CD4-positive, alpha-beta T cell (primary cell): ENCODE measurements at regions of chr2 and their contacts with region 1.

Region 1: GRCh38 chr2:55718165-55719008 is 24.7 kb upstream of the PNPT1 start:
- DNase-seq: peak in 8 of 14 experiments; percentile 6 to 66 (median 32)
- ATAC-seq: no peak
- H3K4me3 ChIP-seq: no peak overlapping the region
- H3K4me3 Mint-ChIP-seq: no peak overlapping the region
- H3K27ac ChIP-seq: no peak overlapping the region
- H3K27ac Mint-ChIP-seq: no peak overlapping the region
- H3K4me1 ChIP-seq: no peaks in the 10 kb centered on the region
- H3K4me1 Mint-ChIP-seq: no peaks in the 10 kb centered on the region
- H3K27me3 ChIP-seq: no peaks in the 10 kb centered on the region
- H3K27me3 Mint-ChIP-seq: peaks cover 8% of the 10 kb centered on the region
- CTCF ChIP-seq: peak; percentile 88

Region 2: DNA sequence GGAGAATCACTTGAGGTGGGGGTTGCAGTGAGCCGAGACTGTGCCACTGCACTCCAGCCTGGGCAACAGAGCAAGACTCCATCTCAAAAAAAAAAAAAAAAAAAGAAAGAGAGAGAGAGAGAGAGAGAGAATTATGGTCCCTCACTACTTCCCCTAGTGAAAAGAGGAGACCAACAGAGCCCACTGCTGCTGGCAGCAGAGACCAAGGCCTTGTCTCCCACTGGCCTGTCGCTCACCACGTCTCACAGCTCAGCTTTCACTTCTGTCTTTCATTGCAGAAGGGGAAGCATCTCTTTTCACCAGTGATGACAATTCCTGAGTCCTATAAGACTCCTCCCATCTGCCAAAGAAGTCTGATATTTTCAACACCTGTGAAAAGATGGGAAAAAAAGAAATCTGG is 567.6 kb before region 1 on chr2:
- CTCF ChIA-PET with region 1: no interaction called
- POLR2A ChIA-PET with region 1: no interaction called
- intact Hi-C with region 1: no loop called
- DNase-seq: peak in 3 of 14 experiments; percentile 15 to 48 (median 48)
- ATAC-seq: no peak
- H3K4me3 ChIP-seq: no peak overlapping the region
- H3K4me3 Mint-ChIP-seq: no peak overlapping the region
- H3K27ac ChIP-seq: no peak overlapping the region
- H3K27ac Mint-ChIP-seq: no peak overlapping the region
- H3K4me1 ChIP-seq: peaks cover 2% of the 10 kb centered on the region
- H3K4me1 Mint-ChIP-seq: no peaks in the 10 kb centered on the region
- H3K27me3 ChIP-seq: no peaks in the 10 kb centered on the region
- H3K27me3 Mint-ChIP-seq: no peaks in the 10 kb centered on the region
- CTCF ChIP-seq: no peak

Region 3: DNA sequence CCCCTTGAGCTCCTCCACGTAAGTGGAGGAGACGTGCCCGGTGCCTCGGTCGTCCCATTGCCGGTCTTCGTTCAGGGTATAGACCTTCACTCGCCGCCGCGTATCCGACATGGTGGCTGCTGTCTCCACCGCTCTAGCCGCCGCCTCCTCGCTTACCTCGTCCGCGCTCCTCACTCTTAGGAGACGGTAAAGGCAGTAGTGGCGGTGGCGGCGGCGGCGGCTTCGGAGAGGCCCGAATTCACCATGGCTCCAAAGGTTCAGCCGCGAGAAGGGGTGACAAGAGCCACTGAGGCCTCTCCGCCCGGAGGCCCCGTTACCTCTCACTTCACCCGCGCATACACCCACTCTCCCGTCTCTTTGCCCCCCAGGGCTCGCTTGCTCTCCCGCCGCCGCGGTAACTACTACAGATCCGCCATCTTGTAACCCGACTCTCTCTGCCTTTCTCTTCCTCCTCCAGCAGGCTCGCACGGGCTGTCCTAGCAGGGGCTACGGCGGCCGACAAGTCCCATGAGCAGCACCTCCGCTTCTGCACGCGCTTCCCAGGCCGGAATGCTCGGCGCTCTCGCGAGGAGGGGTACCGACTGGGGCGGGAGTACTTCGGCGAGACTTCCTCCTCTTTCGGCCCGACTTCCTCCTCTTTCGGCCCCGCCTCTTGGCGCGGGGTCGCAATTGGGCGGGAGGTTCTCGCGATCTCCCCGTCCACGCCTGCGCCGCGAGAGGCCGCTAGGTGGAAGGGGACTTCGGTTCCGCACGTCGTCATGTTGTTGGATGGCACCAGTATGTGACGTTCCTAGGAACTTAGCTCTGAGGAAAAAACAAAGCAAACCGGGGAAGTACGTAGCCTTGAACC is 101.0 kb before region 1 on chr2 and contains the start of gene PPP4R3B:
- CTCF ChIA-PET with region 1: no interaction called
- POLR2A ChIA-PET with region 1: no interaction called
- intact Hi-C with region 1: no loop called
- DNase-seq: peak; percentile 97 to 100 (median 98)
- ATAC-seq: peak; percentile 80
- H3K4me3 ChIP-seq: peak within 1 kb of the TSS; percentile 82
- H3K4me3 Mint-ChIP-seq: no peak within 1 kb of the TSS
- H3K27ac ChIP-seq: peak within 1 kb of the TSS; percentile 98 to 99
- H3K27ac Mint-ChIP-seq: no peak within 1 kb of the TSS
- H3K4me1 ChIP-seq: peaks cover 37% of the 10 kb centered on the region
- H3K4me1 Mint-ChIP-seq: peaks cover 61% of the 10 kb centered on the region
- H3K27me3 ChIP-seq: no peaks in the 10 kb centered on the region
- H3K27me3 Mint-ChIP-seq: no peaks in the 10 kb centered on the region
- CTCF ChIP-seq: peak; percentile 35
- total RNA-seq, gene PPP4R3B: 47.7 to 50.3 TPM

Region 4: GRCh38 chr2:55636831-55637230 is 81.6 kb before region 1 on chr2:
- CTCF ChIA-PET with region 1: no interaction called
- POLR2A ChIA-PET with region 1: no interaction called
- intact Hi-C with region 1: no loop called
- DNase-seq: no peak
- ATAC-seq: no peak
- H3K4me3 ChIP-seq: no peak overlapping the region
- H3K4me3 Mint-ChIP-seq: no peak overlapping the region
- H3K27ac ChIP-seq: no peak overlapping the region
- H3K27ac Mint-ChIP-seq: no peak overlapping the region
- H3K4me1 ChIP-seq: no peaks in the 10 kb centered on the region
- H3K4me1 Mint-ChIP-seq: no peaks in the 10 kb centered on the region
- H3K27me3 ChIP-seq: no peaks in the 10 kb centered on the region
- H3K27me3 Mint-ChIP-seq: no peaks in the 10 kb centered on the region
- CTCF ChIP-seq: no peak

Region 5: GRCh38 chr2:56132138-56132537 is 413.8 kb after region 1 on chr2:
- CTCF ChIA-PET with region 1: no interaction called
- POLR2A ChIA-PET with region 1: no interaction called
- intact Hi-C with region 1: loop called in 1 of 2 experiments (anchors 5 kb)
- DNase-seq: peak in 2 of 14 experiments; percentile 1 to 4
- ATAC-seq: no peak
- H3K4me3 ChIP-seq: no peak overlapping the region
- H3K4me3 Mint-ChIP-seq: no peak overlapping the region
- H3K27ac ChIP-seq: no peak overlapping the region
- H3K27ac Mint-ChIP-seq: no peak overlapping the region
- H3K4me1 ChIP-seq: no peaks in the 10 kb centered on the region
- H3K4me1 Mint-ChIP-seq: no peaks in the 10 kb centered on the region
- H3K27me3 ChIP-seq: no peaks in the 10 kb centered on the region
- H3K27me3 Mint-ChIP-seq: no peaks in the 10 kb centered on the region
- CTCF ChIP-seq: no peak

Region 6: GRCh38 chr2:56369316-56369715 is 650.9 kb after region 1 on chr2:
- CTCF ChIA-PET with region 1: no interaction called
- POLR2A ChIA-PET with region 1: no interaction called
- intact Hi-C with region 1: no loop called
- DNase-seq: no peak
- ATAC-seq: no peak
- H3K4me3 ChIP-seq: no peak overlapping the region
- H3K4me3 Mint-ChIP-seq: no peak overlapping the region
- H3K27ac ChIP-seq: no peak overlapping the region
- H3K27ac Mint-ChIP-seq: no peak overlapping the region
- H3K4me1 ChIP-seq: no peaks in the 10 kb centered on the region
- H3K4me1 Mint-ChIP-seq: no peaks in the 10 kb centered on the region
- H3K27me3 ChIP-seq: no peaks in the 10 kb centered on the region
- H3K27me3 Mint-ChIP-seq: no peaks in the 10 kb centered on the region
- CTCF ChIP-seq: no peak

Region 7: GRCh38 chr2:57497489-57498096 is 1779.2 kb after region 1 on chr2:
- CTCF ChIA-PET with region 1: no interaction called
- POLR2A ChIA-PET with region 1: no interaction called
- intact Hi-C with region 1: loop called in 1 of 2 experiments (anchors 5 kb)
- DNase-seq: peak in 4 of 14 experiments; percentile 2 to 24 (median 14)
- ATAC-seq: no peak
- H3K4me3 ChIP-seq: no peak overlapping the region
- H3K4me3 Mint-ChIP-seq: no peak overlapping the region
- H3K27ac ChIP-seq: no peak overlapping the region
- H3K27ac Mint-ChIP-seq: no peak overlapping the region
- H3K4me1 ChIP-seq: no peaks in the 10 kb centered on the region
- H3K4me1 Mint-ChIP-seq: peaks cover 4% of the 10 kb centered on the region
- H3K27me3 ChIP-seq: no peaks in the 10 kb centered on the region
- H3K27me3 Mint-ChIP-seq: peaks cover 4% of the 10 kb centered on the region
- CTCF ChIP-seq: peak; percentile 65

Region 8: GRCh38 chr2:57516698-57517340 is 1798.4 kb after region 1 on chr2:
- CTCF ChIA-PET with region 1: no interaction called
- POLR2A ChIA-PET with region 1: no interaction called
- intact Hi-C with region 1: loop called (anchors 2 to 5 kb)
- DNase-seq: peak in 3 of 14 experiments; percentile 20 to 35 (median 25)
- ATAC-seq: peak; percentile 32
- H3K4me3 ChIP-seq: no peak overlapping the region
- H3K4me3 Mint-ChIP-seq: no peak overlapping the region
- H3K27ac ChIP-seq: no peak overlapping the region
- H3K27ac Mint-ChIP-seq: no peak overlapping the region
- H3K4me1 ChIP-seq: no peaks in the 10 kb centered on the region
- H3K4me1 Mint-ChIP-seq: no peaks in the 10 kb centered on the region
- H3K27me3 ChIP-seq: no peaks in the 10 kb centered on the region
- H3K27me3 Mint-ChIP-seq: no peaks in the 10 kb centered on the region
- CTCF ChIP-seq: peak; percentile 70